MCF 10A (cell line): ENCODE measurements at regions of chr3 and their contacts with region 1.

Region 1: GRCh38 chr3:124928333-124929202 is 6.0 kb downstream of the MUC13 start:
- DNase-seq: peak; percentile 78
- H3K4me3 Mint-ChIP-seq: no peak overlapping the region
- H3K27ac Mint-ChIP-seq: no peak overlapping the region
- H3K4me1 Mint-ChIP-seq: peaks cover 8% of the 10 kb centered on the region
- H3K27me3 Mint-ChIP-seq: no peaks in the 10 kb centered on the region
- CTCF ChIP-seq: peak; percentile 48

Region 2: DNA sequence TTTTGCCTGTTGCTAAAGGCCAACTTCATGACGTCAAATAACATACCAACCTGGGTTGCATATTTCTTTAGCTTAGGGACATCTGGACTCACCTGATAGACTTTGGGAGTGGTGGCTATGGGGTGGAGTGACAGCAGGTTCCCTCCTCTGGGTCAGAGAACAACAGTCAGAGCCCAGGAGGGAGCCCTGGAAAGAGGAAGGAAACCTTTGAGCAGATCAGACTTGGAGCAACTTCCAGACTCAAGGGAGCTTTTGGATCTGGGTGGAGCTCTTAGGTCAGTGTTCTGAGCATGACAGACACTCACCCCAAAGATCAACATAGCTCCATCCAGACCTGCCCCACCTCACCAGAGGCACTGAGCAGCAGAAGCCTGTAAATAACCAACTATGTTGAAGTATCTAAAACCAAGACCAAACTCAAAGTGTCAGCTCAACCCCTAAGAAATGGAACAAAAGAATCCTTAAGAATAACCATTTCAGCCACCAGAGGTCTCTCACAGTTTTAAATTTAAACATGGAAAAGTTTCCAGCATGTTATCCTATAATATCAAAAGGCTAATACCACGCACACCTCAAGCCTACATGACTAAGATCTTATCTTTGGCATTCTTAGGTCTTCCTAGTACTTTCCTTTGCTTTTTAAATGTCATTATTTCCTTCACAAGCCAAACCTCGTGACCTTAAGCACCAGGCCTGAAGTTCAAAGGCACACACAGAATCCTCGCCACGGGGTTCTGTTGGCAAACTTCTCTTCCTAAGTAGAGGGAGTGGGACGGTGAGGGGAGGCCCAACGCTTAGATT is 141.9 kb before region 1 on chr3:
- CTCF ChIA-PET with region 1: interaction called, 12 read pairs
- POLR2A ChIA-PET with region 1: no interaction called
- intact Hi-C with region 1: no loop called
- DNase-seq: peak; percentile 41
- H3K4me3 Mint-ChIP-seq: no peak overlapping the region
- H3K27ac Mint-ChIP-seq: peak overlapping the region; percentile 23
- H3K4me1 Mint-ChIP-seq: peaks cover 10% of the 10 kb centered on the region
- H3K27me3 Mint-ChIP-seq: no peaks in the 10 kb centered on the region
- CTCF ChIP-seq: peak; percentile 38

Region 3: GRCh38 chr3:124916837-124917409 is 11.6 kb before region 1 on chr3:
- CTCF ChIA-PET with region 1: interaction called, 10 read pairs
- POLR2A ChIA-PET with region 1: interaction called, 3 read pairs
- intact Hi-C with region 1: no loop called
- DNase-seq: no peak
- H3K4me3 Mint-ChIP-seq: no peak overlapping the region
- H3K27ac Mint-ChIP-seq: no peak overlapping the region
- H3K4me1 Mint-ChIP-seq: no peaks in the 10 kb centered on the region
- H3K27me3 Mint-ChIP-seq: peaks cover 21% of the 10 kb centered on the region
- CTCF ChIP-seq: no peak

Region 4: GRCh38 chr3:124986158-124987143 is 57.9 kb after region 1 on chr3:
- CTCF ChIA-PET with region 1: interaction called, 7 read pairs
- POLR2A ChIA-PET with region 1: no interaction called
- intact Hi-C with region 1: loop called (anchors 1 kb)
- DNase-seq: peak; percentile 92
- H3K4me3 Mint-ChIP-seq: no peak overlapping the region
- H3K27ac Mint-ChIP-seq: peak overlapping the region; percentile 95
- H3K4me1 Mint-ChIP-seq: peaks cover 23% of the 10 kb centered on the region
- H3K27me3 Mint-ChIP-seq: no peaks in the 10 kb centered on the region
- CTCF ChIP-seq: peak; percentile 36

Region 5: GRCh38 chr3:125107861-125108567 is 179.4 kb after region 1 on chr3:
- CTCF ChIA-PET with region 1: no interaction called
- POLR2A ChIA-PET with region 1: no interaction called
- intact Hi-C with region 1: no loop called
- DNase-seq: peak; percentile 69
- H3K4me3 Mint-ChIP-seq: no peak overlapping the region
- H3K27ac Mint-ChIP-seq: no peak overlapping the region
- H3K4me1 Mint-ChIP-seq: peaks cover 37% of the 10 kb centered on the region
- H3K27me3 Mint-ChIP-seq: no peaks in the 10 kb centered on the region
- CTCF ChIP-seq: no peak

Region 6: DNA sequence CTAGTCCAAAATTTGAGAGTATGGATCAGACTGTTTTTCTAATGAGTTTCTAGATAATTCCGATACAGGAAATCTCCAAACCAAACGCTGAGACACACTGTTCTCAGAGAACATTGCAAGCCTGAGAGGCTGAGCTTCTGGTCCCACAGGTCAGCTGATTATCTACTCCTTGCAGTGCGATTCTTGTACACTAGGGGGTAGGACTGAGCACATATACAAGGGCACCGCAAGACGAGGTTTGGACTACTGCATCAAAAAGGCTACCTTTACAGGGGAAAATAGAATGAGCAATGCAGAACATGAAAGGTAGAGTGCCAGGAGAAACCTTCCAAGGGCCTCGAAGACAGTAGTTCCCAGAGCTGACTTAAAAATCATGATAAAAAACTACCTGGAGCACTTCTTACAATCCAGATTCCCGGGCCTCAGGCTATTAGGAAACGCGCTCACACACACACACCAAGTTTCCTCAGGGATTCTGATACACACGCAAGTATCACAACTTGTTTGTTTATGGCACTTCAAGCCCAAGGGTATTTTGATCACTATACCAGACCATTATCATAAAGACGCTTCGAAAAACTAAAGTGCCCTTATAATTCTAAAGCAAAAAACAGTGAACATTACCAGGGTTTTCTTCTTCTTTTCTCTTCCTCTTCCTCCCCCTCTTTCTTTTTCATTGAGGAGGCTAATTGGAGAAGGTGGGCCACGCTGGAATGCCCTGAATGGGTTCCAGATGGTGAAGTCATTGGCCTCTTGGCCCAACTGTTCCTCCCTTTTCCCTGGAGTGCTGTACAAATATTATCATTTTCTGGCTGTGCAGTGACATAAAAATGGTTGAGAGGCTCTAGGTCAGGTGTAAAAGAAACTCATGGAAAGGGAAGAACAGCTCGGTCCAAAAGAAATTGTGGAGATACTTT is 222.2 kb after region 1 on chr3:
- CTCF ChIA-PET with region 1: no interaction called
- POLR2A ChIA-PET with region 1: no interaction called
- intact Hi-C with region 1: loop called (anchors 5 kb)
- DNase-seq: peak; percentile 81
- H3K4me3 Mint-ChIP-seq: no peak overlapping the region
- H3K27ac Mint-ChIP-seq: no peak overlapping the region
- H3K4me1 Mint-ChIP-seq: no peaks in the 10 kb centered on the region
- H3K27me3 Mint-ChIP-seq: no peaks in the 10 kb centered on the region
- CTCF ChIP-seq: peak; percentile 55

Region 7: GRCh38 chr3:125437631-125438435 is 509.3 kb after region 1 on chr3:
- CTCF ChIA-PET with region 1: interaction called, 4 read pairs
- POLR2A ChIA-PET with region 1: no interaction called
- intact Hi-C with region 1: loop called (anchors 2 kb)
- DNase-seq: peak; percentile 59
- H3K4me3 Mint-ChIP-seq: no peak overlapping the region
- H3K27ac Mint-ChIP-seq: no peak overlapping the region
- H3K4me1 Mint-ChIP-seq: peaks cover 14% of the 10 kb centered on the region
- H3K27me3 Mint-ChIP-seq: no peaks in the 10 kb centered on the region
- CTCF ChIP-seq: peak; percentile 90

Region 8: DNA sequence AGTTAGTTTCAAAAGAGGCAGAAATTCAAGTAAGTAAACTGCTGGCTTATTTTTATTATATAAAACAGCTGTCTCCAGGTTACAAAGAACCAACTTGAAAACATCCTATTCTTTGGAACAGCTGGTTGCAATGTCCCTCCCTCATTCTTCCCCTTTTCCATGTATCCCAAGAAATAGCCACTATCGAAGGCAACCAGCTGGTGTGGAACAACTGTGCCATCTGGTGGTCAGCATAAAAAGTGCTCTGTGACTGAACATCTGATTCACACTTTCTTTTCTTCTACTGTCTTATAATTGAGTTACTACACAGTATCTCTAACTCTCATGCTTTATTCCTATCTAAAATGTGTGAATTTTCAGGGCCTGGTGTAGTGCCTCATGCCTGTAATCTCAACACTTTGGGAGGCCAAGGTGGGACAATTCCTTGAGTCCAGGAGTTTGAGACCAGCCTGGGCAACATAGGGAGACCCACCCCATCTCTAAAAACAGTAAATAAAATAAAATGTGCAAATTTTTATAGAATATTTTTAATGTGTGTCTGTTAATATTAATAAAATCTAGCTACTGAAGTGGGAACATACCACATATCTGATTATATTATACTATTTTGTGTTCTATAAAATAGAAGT is 657.1 kb after region 1 on chr3:
- CTCF ChIA-PET with region 1: interaction called, 26 read pairs
- POLR2A ChIA-PET with region 1: no interaction called
- intact Hi-C with region 1: loop called (anchors 1 kb)
- DNase-seq: peak; percentile 72
- H3K4me3 Mint-ChIP-seq: no peak overlapping the region
- H3K27ac Mint-ChIP-seq: no peak overlapping the region
- H3K4me1 Mint-ChIP-seq: peaks cover 9% of the 10 kb centered on the region
- H3K27me3 Mint-ChIP-seq: no peaks in the 10 kb centered on the region
- CTCF ChIP-seq: peak; percentile 87